ENCODE measurements at regions of chr3 and their contacts with region 1.

Region 1: GRCh38 chr3:138594150-138594934 is at the start of gene CEP70:
- DNase-seq: peak; percentile 93
- ATAC-seq: peak; percentile 92
- H3K4me3 ChIP-seq: peak within 1 kb of the TSS; percentile 69 to 93 (median 80)
- H3K4me3 Mint-ChIP-seq: peak within 1 kb of the TSS; percentile 91
- H3K27ac ChIP-seq: peak within 1 kb of the TSS; percentile 71 to 74
- H3K27ac Mint-ChIP-seq: peak within 1 kb of the TSS; percentile 85
- H3K4me1 ChIP-seq: peaks cover 5 to 10% of the 10 kb centered on the region in 2 donors
- H3K4me1 Mint-ChIP-seq: peaks cover 7% of the 10 kb centered on the region
- H3K27me3 ChIP-seq: peaks cover 0 to 3% (median 0%) of the 10 kb centered on the region in 4 experiments
- H3K27me3 Mint-ChIP-seq: no peaks in the 10 kb centered on the region
- CTCF ChIP-seq: peak; percentile 92
- total RNA-seq, gene CEP70: 9.6 and 11.6 TPM in 2 replicates

Region 2: DNA sequence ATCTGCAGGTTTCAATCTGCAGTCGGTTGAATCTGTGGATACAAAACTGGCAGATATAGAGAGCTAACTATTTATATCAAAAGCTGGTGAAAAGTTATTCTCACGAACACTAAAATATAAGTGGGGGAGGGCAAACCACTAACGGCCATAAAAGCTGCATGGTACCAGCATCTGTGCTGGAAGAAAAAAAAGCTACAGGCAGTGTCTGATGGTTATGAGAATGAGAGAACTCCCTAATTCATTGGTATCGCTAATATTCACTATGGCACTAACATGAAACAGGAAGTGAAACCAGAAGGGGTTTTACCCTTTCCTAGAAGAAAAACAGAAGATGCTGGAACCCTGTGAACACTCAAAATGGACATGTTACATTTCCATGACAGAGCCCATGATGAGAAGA is 16.2 kb before region 1 on chr3:
- CTCF ChIA-PET with region 1: interaction called, 18 read pairs
- POLR2A ChIA-PET with region 1: interaction called, 4 read pairs
- intact Hi-C with region 1: loop called (anchors 1 kb)
- DNase-seq: peak; percentile 74
- ATAC-seq: peak; percentile 91
- H3K4me3 ChIP-seq: no peak overlapping the region
- H3K4me3 Mint-ChIP-seq: no peak overlapping the region
- H3K27ac ChIP-seq: no peak overlapping the region
- H3K27ac Mint-ChIP-seq: no peak overlapping the region
- H3K4me1 ChIP-seq: peaks cover 16 to 22% of the 10 kb centered on the region in 2 donors
- H3K4me1 Mint-ChIP-seq: peaks cover 21% of the 10 kb centered on the region
- H3K27me3 ChIP-seq: peaks cover 0 to 5% (median 0%) of the 10 kb centered on the region in 4 experiments
- H3K27me3 Mint-ChIP-seq: peaks cover 10% of the 10 kb centered on the region
- CTCF ChIP-seq: no peak

Region 3: GRCh38 chr3:138608322-138609135 is 14.2 kb after region 1 on chr3 and contains the start of gene FAIM:
- CTCF ChIA-PET with region 1: interaction called, 16 read pairs
- POLR2A ChIA-PET with region 1: interaction called, 19 read pairs
- intact Hi-C with region 1: loop called (anchors 1 kb)
- DNase-seq: peak; percentile 85
- ATAC-seq: peak; percentile 74
- H3K4me3 ChIP-seq: peak within 1 kb of the TSS; percentile 57 to 83 (median 71)
- H3K4me3 Mint-ChIP-seq: peak within 1 kb of the TSS; percentile 87
- H3K27ac ChIP-seq: peak within 1 kb of the TSS; percentile 60 to 84
- H3K27ac Mint-ChIP-seq: peak within 1 kb of the TSS; percentile 93
- H3K4me1 ChIP-seq: peaks cover 12 to 14% of the 10 kb centered on the region in 2 donors
- H3K4me1 Mint-ChIP-seq: peaks cover 15% of the 10 kb centered on the region
- H3K27me3 ChIP-seq: no peaks in the 10 kb centered on the region
- H3K27me3 Mint-ChIP-seq: no peaks in the 10 kb centered on the region
- CTCF ChIP-seq: no peak
- total RNA-seq, gene FAIM: 13.8 and 16.3 TPM in 2 replicates

Region 4: GRCh38 chr3:138834359-138835212 is 240.2 kb after region 1 on chr3 and contains the start of gene PIK3CB:
- CTCF ChIA-PET with region 1: no interaction called
- POLR2A ChIA-PET with region 1: no interaction called
- intact Hi-C with region 1: loop called (anchors 1 kb)
- DNase-seq: peak; percentile 89
- ATAC-seq: peak; percentile 95
- H3K4me3 ChIP-seq: peak within 1 kb of the TSS; percentile 67 to 88 (median 78)
- H3K4me3 Mint-ChIP-seq: peak within 1 kb of the TSS; percentile 92
- H3K27ac ChIP-seq: peak within 1 kb of the TSS; percentile 46 to 84
- H3K27ac Mint-ChIP-seq: peak within 1 kb of the TSS; percentile 95
- H3K4me1 ChIP-seq: peaks cover 14 to 18% of the 10 kb centered on the region in 2 donors
- H3K4me1 Mint-ChIP-seq: peaks cover 23% of the 10 kb centered on the region
- H3K27me3 ChIP-seq: no peaks in the 10 kb centered on the region
- H3K27me3 Mint-ChIP-seq: no peaks in the 10 kb centered on the region
- CTCF ChIP-seq: peak; percentile 31
- total RNA-seq, gene PIK3CB: 29.4 and 35.1 TPM in 2 replicates

Region 5: DNA sequence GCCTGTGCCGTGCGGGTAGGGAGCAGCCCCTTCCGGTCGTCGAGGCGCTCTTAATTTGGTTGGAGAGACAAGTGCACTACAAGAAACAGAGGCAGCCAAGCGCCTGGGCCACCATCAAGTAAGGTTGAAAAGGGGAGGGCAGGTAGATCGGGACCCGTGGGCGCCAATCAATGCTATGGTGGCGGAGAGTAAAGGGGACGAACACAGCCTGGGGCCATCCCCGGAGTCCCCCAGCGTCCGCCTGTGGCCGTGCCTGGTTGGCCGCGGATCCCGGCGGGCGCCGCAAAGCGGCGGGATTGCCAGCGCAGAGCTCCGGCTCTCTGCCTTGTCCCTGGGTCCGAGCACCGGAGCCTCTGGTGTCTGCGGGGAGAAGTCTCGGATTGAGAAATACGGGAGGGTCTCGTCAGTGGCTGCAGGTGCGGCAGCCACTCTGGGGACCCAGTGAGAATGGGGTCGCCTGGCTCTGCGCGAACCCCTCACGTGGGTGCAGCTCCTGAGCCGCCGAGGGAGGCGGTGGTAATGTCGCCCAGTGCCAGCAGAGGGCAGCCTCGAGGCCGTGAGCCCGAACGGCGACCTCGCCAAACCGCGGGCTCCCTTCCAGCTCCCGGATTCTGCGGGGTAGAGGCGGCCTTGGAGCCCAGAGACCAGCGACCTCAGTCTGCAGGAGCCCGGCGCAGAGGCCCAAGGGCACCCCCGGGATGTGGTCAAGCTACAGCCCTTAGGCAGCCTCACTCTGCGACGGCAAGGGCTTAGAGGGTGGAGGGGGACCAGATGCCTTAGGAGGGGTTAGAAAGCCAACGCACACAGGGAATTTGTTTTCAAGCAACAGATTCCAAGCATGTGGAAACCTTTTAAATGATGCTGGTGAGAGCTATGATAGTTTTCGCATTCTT is 341.8 kb after region 1 on chr3:
- CTCF ChIA-PET with region 1: interaction called, 33 read pairs
- POLR2A ChIA-PET with region 1: no interaction called
- intact Hi-C with region 1: no loop called
- DNase-seq: peak; percentile 77
- ATAC-seq: peak; percentile 87
- H3K4me3 ChIP-seq: peak overlapping the region in 4 of 5 experiments; percentile 10 to 55 (median 38)
- H3K4me3 Mint-ChIP-seq: peak overlapping the region; percentile 80
- H3K27ac ChIP-seq: no peak overlapping the region
- H3K27ac Mint-ChIP-seq: no peak overlapping the region
- H3K4me1 ChIP-seq: peaks cover 46 to 47% of the 10 kb centered on the region in 2 donors
- H3K4me1 Mint-ChIP-seq: peaks cover 32% of the 10 kb centered on the region
- H3K27me3 ChIP-seq: peaks cover 0 to 80% (median 58%) of the 10 kb centered on the region in 4 experiments
- H3K27me3 Mint-ChIP-seq: peaks cover 66% of the 10 kb centered on the region
- CTCF ChIP-seq: peak; percentile 97

Measured in B cell (primary cell).